Posterior vena cava (tissue), 2 donors: ENCODE measurements at regions of chr17 and their contacts with region 1.

Region 1: GRCh38 chr17:39294060-39294459 is 68.3 kb upstream of the STAC2 start:
- DNase-seq: no peak

Region 2: DNA sequence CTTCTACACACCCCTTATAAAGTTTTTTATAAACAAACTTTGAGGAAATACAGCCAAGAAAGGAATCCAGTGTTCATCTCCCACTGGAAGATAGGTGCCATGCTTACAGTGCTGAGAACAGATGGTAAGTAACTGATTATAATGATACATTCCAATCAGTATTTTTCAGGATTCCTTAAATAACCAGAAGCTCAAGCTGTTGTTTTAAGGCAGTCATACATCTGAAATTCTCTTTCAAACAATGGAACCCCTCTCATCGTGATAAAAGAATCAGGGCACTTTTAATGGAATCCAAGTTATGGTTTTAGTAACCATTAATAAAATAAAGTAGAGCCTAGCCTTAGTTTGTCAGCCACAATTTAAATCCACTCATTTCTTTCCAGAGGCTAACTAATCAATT is 12.3 kb before region 1 on chr17:
- intact Hi-C with region 1: no loop called
- DNase-seq: no peak

Region 3: GRCh38 chr17:39352511-39352910 is 58.5 kb after region 1 on chr17:
- intact Hi-C with region 1: loop called in 1 of 2 experiments (anchors 10 kb)
- DNase-seq: no peak

Region 4: GRCh38 chr17:39573447-39574298 is 279.6 kb after region 1 on chr17:
- intact Hi-C with region 1: no loop called
- DNase-seq: peak; percentile 92